ENCODE measurements at regions of chr4 and their contacts with region 1.

Region 1: GRCh38 chr4:24210332-24210902 is 320.6 kb upstream of the PPARGC1A start:
- DNase-seq: peak; percentile 77
- H3K4me3 ChIP-seq: no peak overlapping the region; the same call in 1 of the 2 replicates
- H3K27me3 ChIP-seq: no peaks in the 10 kb centered on the region
- CTCF ChIP-seq: no peak

Region 2: GRCh38 chr4:24197950-24198349 is 12.5 kb before region 1 on chr4:
- CTCF ChIA-PET with region 1: interaction called, 13 read pairs
- POLR2A ChIA-PET with region 1: no interaction called
- DNase-seq: no peak
- H3K4me3 ChIP-seq: no peak overlapping the region
- H3K27me3 ChIP-seq: 0 out of 2 replicates have a peak, but pooled peaks cover 1% of the 10 kb centered on the region
- CTCF ChIP-seq: no peak

Region 3: DNA sequence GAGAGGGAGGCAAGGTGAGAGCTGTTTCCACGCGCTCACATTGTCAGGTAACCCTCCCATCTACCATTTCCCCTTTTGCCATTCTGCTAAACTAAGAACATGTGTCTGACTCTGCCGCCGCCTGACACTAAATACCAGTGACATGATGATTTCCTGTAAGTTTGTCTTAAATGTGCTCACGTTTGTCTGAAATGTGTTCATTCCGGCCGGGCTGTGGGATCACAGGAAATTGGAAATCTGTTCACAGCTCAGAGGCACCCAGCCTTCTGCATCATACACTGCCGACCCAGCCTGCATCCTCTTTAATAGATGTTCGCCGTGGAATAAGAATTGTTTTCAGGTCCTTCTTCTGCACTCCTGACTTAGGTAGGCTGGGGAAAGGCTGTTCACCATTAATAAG is 15.6 kb after region 1 on chr4:
- CTCF ChIA-PET with region 1: interaction called, 13 read pairs
- POLR2A ChIA-PET with region 1: no interaction called
- DNase-seq: no peak
- H3K4me3 ChIP-seq: 0 out of 2 replicates have a peak overlapping the region, but pooled peaks have one; percentile 5
- H3K27me3 ChIP-seq: no peaks in the 10 kb centered on the region
- CTCF ChIP-seq: no peak

Measured in BJ (cell line).